GM12878 (cell line): ENCODE measurements at regions of chr10 and their contacts with region 1.

Region 1: DNA sequence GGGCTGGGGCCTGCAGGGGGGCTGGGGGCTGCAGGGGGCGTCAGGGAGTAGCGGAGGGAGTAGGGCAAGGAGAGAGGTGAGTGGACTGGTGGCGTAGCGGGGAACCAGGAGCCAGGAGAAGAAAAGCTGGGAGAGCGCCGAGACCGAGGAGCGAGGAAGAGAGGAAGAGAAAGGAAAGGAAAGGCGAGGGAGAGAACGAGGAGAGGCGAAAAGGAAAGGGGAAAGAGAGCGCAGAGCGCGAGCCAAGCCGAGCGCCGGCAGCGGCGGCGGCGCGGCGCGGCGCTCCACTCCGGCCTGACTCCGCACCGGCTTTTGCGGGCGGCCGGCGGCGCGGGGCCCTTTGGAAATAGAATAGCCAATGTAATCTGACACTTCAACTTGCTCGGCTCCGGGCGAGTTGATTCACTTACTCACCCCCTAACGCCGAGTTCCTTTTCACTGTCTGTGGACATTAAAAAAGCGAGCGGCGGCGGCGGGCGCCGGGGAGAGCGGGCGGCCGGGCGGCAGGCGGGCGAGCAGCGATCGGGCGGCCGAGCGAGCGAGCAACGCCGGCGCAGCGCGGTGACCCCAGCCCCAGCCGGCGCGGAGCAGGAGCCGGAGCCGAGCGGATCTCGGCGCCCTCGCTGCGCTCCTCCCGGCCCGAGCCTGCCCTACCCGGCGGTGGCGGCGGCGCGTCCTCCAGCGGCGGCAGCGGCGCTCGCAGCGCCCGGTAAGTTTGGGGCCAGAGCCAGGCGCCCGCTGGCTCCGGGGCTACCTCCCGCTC is at the start of gene ZMIZ1:
- DNase-seq: no peak
- ATAC-seq: peak; percentile 58
- H3K4me3 ChIP-seq: peak within 1 kb of the TSS; percentile 84
- H3K27ac ChIP-seq: no peak within 1 kb of the TSS
- H3K4me1 ChIP-seq: peaks cover 4% of the 10 kb centered on the region; the same call in 1 of the 2 replicates
- H3K27me3 ChIP-seq: peaks cover 3 to 7% of the 10 kb centered on the region in 2 experiments
- CTCF ChIP-seq: peak; percentile 13 to 36 (median 19); a peak in 3 of 6 replicates
- EP300 ChIP-seq: 0 out of 4 replicates have a peak, but pooled peaks of 1 of the 2 experiments have one; percentile 14
- POLR2A ChIP-seq: no peak
- RAD21 ChIP-seq: peak; percentile 55
- polyA plus RNA-seq, gene ZMIZ1: 3.1 to 4.5 TPM

Region 2: GRCh38 chr10:78972947-78973900 is 95.5 kb before region 1 on chr10:
- CTCF ChIA-PET with region 1: interaction called, 5 read pairs
- POLR2A ChIA-PET with region 1: no interaction called
- RAD21 ChIA-PET with region 1: interaction called, 5 read pairs
- SMC1A ChIA-PET with region 1: no interaction called
- in situ Hi-C with region 1: no loop called
- intact Hi-C with region 1: loop called (anchors 5 kb)
- DNase-seq: peak; percentile 43
- ATAC-seq: peak; percentile 84
- H3K4me3 ChIP-seq: peak overlapping the region; percentile 68; the same call in 1 of the 2 replicates
- H3K27ac ChIP-seq: no peak overlapping the region
- H3K4me1 ChIP-seq: peaks cover 4% of the 10 kb centered on the region
- H3K27me3 ChIP-seq: no peaks in the 10 kb centered on the region; a peak in 1 of 4 replicates
- CTCF ChIP-seq: no peak
- EP300 ChIP-seq: no peak
- POLR2A ChIP-seq: peak; percentile 59; the same call in 1 of the 2 replicates
- RAD21 ChIP-seq: no peak

Region 3: DNA sequence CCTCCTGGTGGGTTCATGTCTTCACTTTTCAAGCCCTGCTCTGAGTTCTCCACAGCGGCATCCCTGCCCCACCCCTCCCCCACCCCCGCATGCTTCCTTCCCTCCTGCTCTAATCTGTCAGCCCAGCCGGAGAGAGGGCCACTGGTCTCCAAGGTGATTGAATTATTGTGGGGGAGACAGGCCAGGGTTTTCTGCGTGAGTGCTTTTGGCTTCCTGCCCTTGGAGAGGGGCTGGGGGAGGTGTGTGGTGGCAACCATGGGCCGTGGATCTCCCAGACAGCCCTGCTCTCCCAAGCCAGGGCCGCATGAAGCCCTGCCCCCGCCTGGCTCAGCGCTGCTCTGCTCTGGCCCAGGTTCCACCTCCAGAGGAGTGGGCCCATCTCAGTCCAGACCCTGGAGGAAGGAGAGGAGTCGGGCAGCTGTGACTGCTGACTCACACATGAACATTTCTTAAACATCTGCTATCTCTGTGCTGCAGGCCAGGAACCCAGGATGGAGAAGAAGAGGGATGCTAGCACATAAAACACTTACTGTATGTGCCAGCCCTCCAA is 109.9 kb after region 1 on chr10:
- CTCF ChIA-PET with region 1: no interaction called
- POLR2A ChIA-PET with region 1: no interaction called
- RAD21 ChIA-PET with region 1: no interaction called
- SMC1A ChIA-PET with region 1: no interaction called
- in situ Hi-C with region 1: no loop called
- intact Hi-C with region 1: loop called (anchors 5 kb)
- DNase-seq: no peak
- ATAC-seq: peak; percentile 17; the same call in 2 of the 3 replicates
- H3K4me3 ChIP-seq: no peak overlapping the region
- H3K27ac ChIP-seq: no peak overlapping the region
- H3K4me1 ChIP-seq: peaks cover 8% of the 10 kb centered on the region
- H3K27me3 ChIP-seq: no peaks in the 10 kb centered on the region
- CTCF ChIP-seq: no peak
- EP300 ChIP-seq: no peak
- POLR2A ChIP-seq: no peak
- RAD21 ChIP-seq: no peak

Region 4: DNA sequence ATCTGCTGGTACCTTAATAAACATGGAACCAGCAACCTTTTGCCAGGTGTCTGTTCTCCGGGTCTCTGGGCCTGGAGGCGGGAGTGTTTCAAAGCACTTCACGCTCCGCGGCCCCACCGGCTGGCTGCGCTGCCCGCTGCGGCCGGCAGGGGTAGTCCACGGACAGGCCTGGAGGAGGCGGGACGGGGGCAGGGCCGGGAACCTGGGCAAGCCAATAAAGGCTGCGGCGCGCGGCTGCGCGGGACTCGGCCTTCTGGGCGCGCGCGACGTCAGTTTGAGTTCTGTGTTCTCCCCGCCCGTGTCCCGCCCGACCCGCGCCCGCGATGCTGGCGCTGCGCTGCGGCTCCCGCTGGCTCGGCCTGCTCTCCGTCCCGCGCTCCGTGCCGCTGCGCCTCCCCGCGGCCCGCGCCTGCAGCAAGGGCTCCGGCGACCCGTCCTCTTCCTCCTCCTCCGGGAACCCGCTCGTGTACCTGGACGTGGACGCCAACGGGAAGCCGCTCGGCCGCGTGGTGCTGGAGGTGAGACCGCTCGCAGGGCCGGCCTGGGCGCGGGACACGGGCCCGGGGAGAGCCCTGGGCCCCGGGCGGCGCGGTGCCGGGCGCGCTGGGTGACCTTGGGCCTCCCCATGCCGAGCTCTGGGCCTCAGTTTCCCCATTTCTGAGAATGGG is 278.6 kb after region 1 on chr10 and contains the start of gene PPIF:
- CTCF ChIA-PET with region 1: no interaction called
- POLR2A ChIA-PET with region 1: no interaction called
- RAD21 ChIA-PET with region 1: no interaction called
- SMC1A ChIA-PET with region 1: no interaction called
- in situ Hi-C with region 1: no loop called
- intact Hi-C with region 1: no loop called
- DNase-seq: peak; percentile 65
- ATAC-seq: peak; percentile 87
- H3K4me3 ChIP-seq: peak within 1 kb of the TSS; percentile 84
- H3K27ac ChIP-seq: peak within 1 kb of the TSS; percentile 92
- H3K4me1 ChIP-seq: peaks cover 12% of the 10 kb centered on the region
- H3K27me3 ChIP-seq: no peaks in the 10 kb centered on the region
- CTCF ChIP-seq: peak; percentile 92 to 94 (median 93)
- EP300 ChIP-seq: no peak
- POLR2A ChIP-seq: peak; percentile 89
- RAD21 ChIP-seq: 0 out of 2 replicates have a peak, but pooled peaks have one; percentile 46
- polyA plus RNA-seq, gene PPIF: 28.8 to 71.9 TPM